Caco-2 (cell line): ENCODE measurements at regions of chr5 and their contacts with region 1.

Region 1: DNA sequence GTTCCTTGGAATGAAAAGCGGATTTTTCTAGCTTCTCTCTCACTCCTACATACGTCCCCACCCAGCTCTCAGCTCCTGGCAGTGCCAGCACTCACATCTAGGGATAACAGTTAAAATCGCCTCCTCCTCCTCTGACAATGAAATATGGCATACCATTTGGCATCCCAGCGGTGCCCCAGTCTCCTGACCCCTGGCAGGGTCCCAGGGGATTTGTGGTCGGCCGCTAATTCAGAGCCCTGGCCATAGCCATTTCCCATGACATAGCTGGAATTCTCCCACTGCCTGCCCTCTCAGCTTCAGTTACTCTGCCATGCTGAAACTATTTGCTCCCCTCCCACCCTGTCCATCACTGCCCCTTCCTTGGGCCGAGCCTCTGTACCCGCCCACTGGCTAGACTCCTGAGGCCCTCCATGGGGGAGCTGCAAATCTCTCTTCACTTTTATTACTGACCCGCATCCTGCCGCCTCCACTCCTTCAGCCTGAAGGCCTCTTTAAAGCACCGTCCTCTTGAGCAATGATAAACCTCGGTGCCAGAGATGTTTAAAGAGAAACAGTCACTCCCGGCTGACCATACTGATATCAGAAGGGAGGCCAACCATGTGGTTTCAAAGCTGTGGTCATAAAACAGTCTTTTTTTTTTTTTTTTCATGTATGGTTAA is 139.8 kb downstream of the SLIT3 start:
- DNase-seq: peak; percentile 79 to 83
- H3K4me3 ChIP-seq: no peak overlapping the region
- H3K4me3 Mint-ChIP-seq: no peak overlapping the region
- H3K27ac Mint-ChIP-seq: peak overlapping the region; percentile 34
- H3K4me1 ChIP-seq: peaks cover 38% of the 10 kb centered on the region
- H3K4me1 Mint-ChIP-seq: peaks cover 42% of the 10 kb centered on the region
- H3K27me3 ChIP-seq: no peaks in the 10 kb centered on the region
- H3K27me3 Mint-ChIP-seq: no peaks in the 10 kb centered on the region
- CTCF ChIP-seq: no peak

Region 2: DNA sequence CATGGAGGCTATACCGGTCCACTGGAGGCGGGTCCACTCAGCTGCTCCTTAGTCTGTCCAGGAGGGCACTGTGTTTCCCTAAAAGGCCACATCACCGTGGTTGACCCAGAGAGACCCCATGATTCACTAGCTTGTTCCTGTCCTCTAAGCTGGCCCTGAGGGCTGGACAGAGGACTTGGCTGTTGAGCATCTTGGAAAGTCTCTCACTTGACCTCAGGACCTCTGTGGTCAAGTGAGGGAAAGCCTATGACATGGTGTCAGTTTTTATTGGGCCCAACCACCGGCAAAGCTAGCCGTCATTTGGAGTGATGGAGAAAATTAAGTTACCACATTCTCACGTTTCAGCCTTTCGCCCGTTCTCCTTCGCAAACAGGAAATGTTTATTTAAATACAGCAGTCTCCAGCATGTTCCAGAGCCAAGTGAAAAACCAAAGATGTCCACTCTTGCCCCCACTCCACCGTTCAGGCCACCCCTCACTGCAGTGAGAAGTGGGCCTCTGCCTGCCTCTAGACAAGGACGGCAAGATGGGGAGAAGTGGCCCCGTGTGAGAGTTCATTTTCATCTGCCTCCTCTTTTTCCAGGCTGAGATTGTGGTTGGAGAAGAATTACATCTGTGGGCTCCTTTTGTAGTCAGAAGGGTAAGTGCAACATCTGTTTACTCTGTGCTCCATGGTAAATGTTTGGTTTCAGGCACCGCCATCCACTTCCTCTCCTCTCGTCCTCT is 135.4 kb after region 1 on chr5:
- CTCF ChIA-PET with region 1: no interaction called
- POLR2A ChIA-PET with region 1: no interaction called
- intact Hi-C with region 1: loop called (anchors 5 kb)
- DNase-seq: peak in 1 of 2 experiments; percentile 29
- H3K4me3 ChIP-seq: no peak overlapping the region
- H3K4me3 Mint-ChIP-seq: peak overlapping the region; percentile 2
- H3K27ac Mint-ChIP-seq: peak overlapping the region; percentile 61
- H3K4me1 ChIP-seq: peaks cover 43% of the 10 kb centered on the region
- H3K4me1 Mint-ChIP-seq: peaks cover 42% of the 10 kb centered on the region
- H3K27me3 ChIP-seq: no peaks in the 10 kb centered on the region
- H3K27me3 Mint-ChIP-seq: no peaks in the 10 kb centered on the region
- CTCF ChIP-seq: no peak